Mammary epithelial cell (primary cell): ENCODE measurements at regions of chr5 and their contacts with region 1.

Region 1: GRCh38 chr5:56301041-56301440 is 67.9 kb upstream of the ANKRD55 start:
- DNase-seq: peak; percentile 91
- H3K4me3 ChIP-seq: no peak overlapping the region
- H3K27ac ChIP-seq: peak overlapping the region; percentile 0
- H3K4me1 ChIP-seq: peaks cover 12% of the 10 kb centered on the region
- H3K27me3 ChIP-seq: no peaks in the 10 kb centered on the region
- CTCF ChIP-seq: no peak

Region 2: DNA sequence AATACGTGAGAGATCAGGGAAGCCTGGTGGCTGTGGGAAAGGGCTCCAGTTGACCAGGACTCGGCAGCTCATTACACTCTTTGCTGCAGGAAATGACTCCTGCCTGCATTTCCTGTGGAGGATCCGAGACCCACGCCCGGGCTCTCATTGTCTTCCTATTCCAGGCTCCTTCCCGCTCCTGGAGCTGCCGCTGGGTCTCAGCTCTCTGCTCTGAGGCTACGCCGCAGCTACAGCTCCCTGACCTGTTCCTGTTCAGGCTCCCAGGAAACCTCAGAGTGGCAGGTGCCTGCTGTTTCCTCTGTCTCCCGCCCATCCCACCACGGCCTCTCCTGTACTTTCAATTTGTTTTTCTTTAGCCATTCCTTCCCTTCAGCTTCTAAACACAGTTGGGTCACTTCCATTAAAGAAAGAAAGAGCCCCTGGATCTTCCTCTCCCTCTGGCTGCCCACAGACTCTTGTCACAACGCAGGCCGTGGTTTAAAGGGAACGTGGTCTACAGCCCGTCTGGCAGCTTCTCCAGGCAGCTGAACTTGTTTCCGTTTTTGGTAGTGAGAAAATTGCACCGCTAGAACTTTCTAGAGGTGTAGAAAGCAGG is 377.8 kb before region 1 on chr5:
- CTCF ChIA-PET with region 1: no interaction called
- dilution Hi-C with region 1: no loop called
- in situ Hi-C with region 1: no loop called
- intact Hi-C with region 1: no loop called
- DNase-seq: no peak
- H3K4me3 ChIP-seq: no peak overlapping the region
- H3K27ac ChIP-seq: no peak overlapping the region
- H3K4me1 ChIP-seq: no peaks in the 10 kb centered on the region
- H3K27me3 ChIP-seq: no peaks in the 10 kb centered on the region
- CTCF ChIP-seq: no peak

Region 3: GRCh38 chr5:56215019-56215830 is 85.8 kb before region 1 on chr5:
- CTCF ChIA-PET with region 1: no interaction called
- dilution Hi-C with region 1: no loop called
- in situ Hi-C with region 1: no loop called
- intact Hi-C with region 1: no loop called
- DNase-seq: no peak
- H3K4me3 ChIP-seq: no peak overlapping the region
- H3K27ac ChIP-seq: no peak overlapping the region
- H3K4me1 ChIP-seq: peaks cover 8% of the 10 kb centered on the region
- H3K27me3 ChIP-seq: no peaks in the 10 kb centered on the region
- CTCF ChIP-seq: no peak

Region 4: DNA sequence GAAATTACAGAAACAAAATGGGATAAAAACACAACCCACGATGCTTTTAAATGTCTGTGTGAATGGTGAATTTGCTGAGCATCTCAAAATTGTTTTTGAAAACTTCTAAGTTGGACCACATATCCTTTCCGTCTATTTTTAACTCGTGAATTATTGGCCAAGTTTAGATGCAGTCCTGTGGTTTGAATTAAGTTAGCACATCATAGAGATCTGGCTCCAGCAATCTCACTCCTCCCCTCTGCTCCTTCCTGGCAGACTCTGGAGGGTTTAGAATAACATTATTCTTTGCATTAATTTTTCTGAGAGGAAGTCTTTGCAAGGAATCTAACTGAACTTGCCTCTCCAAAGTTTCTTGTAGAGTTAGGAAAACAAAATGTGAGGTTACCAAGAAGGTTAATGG is 53.4 kb before region 1 on chr5:
- CTCF ChIA-PET with region 1: no interaction called
- dilution Hi-C with region 1: no loop called
- in situ Hi-C with region 1: no loop called
- intact Hi-C with region 1: no loop called
- DNase-seq: no peak
- H3K4me3 ChIP-seq: no peak overlapping the region
- H3K27ac ChIP-seq: no peak overlapping the region
- H3K4me1 ChIP-seq: no peaks in the 10 kb centered on the region
- H3K27me3 ChIP-seq: no peaks in the 10 kb centered on the region
- CTCF ChIP-seq: no peak

Region 5: GRCh38 chr5:56323505-56323904 is 22.5 kb after region 1 on chr5:
- CTCF ChIA-PET with region 1: no interaction called
- dilution Hi-C with region 1: no loop called
- in situ Hi-C with region 1: no loop called
- intact Hi-C with region 1: loop called (anchors 2 kb)
- DNase-seq: peak; percentile 84
- H3K4me3 ChIP-seq: no peak overlapping the region
- H3K27ac ChIP-seq: no peak overlapping the region
- H3K4me1 ChIP-seq: peaks cover 22% of the 10 kb centered on the region
- H3K27me3 ChIP-seq: no peaks in the 10 kb centered on the region
- CTCF ChIP-seq: peak in 1 of 2 donors; percentile 37